ENCODE measurements at regions of chr19 and their contacts with region 1.

Region 1: GRCh38 chr19:9565900-9566705 is 18.2 kb downstream of the ZNF121 start:
- DNase-seq: no peak
- ATAC-seq: no peak
- H3K4me3 ChIP-seq: no peak overlapping the region
- H3K4me3 Mint-ChIP-seq: no peak overlapping the region
- H3K27ac ChIP-seq: no peak overlapping the region
- H3K27ac Mint-ChIP-seq: peak overlapping the region; percentile 5
- H3K4me1 ChIP-seq: no peaks in the 10 kb centered on the region
- H3K4me1 Mint-ChIP-seq: peaks cover 1% of the 10 kb centered on the region
- H3K27me3 ChIP-seq: no peaks in the 10 kb centered on the region
- H3K27me3 Mint-ChIP-seq: no peaks in the 10 kb centered on the region
- CTCF ChIP-seq: no peak

Region 2: DNA sequence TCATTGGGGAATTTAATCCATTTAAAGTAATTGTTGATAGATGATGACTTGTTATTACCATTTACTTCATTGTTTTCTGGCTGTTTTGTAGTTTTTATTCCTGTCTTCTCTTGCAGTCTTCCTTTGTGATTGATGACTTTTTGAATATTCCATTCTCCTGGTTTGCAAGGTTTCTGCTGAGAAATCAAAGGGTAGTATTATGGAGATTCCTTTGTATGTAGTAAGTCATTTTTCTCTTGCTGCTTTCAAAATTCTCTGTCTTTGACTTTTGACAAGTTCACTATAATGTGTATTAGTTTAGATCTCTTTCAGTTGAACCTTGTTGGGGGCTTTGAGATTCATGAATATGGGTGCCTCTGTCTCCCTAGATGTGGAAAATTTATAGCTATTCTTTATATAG is 236.1 kb before region 1 on chr19:
- CTCF ChIA-PET with region 1: no interaction called
- POLR2A ChIA-PET with region 1: no interaction called
- intact Hi-C with region 1: loop called in 1 of 2 experiments (anchors 5 kb)
- DNase-seq: no peak
- ATAC-seq: no peak
- H3K4me3 ChIP-seq: no peak overlapping the region
- H3K4me3 Mint-ChIP-seq: peak overlapping the region; percentile 30
- H3K27ac ChIP-seq: no peak overlapping the region
- H3K27ac Mint-ChIP-seq: no peak overlapping the region
- H3K4me1 ChIP-seq: peaks cover 3% of the 10 kb centered on the region
- H3K4me1 Mint-ChIP-seq: peaks cover 13% of the 10 kb centered on the region
- H3K27me3 ChIP-seq: no peaks in the 10 kb centered on the region
- H3K27me3 Mint-ChIP-seq: no peaks in the 10 kb centered on the region
- CTCF ChIP-seq: no peak

Region 3: DNA sequence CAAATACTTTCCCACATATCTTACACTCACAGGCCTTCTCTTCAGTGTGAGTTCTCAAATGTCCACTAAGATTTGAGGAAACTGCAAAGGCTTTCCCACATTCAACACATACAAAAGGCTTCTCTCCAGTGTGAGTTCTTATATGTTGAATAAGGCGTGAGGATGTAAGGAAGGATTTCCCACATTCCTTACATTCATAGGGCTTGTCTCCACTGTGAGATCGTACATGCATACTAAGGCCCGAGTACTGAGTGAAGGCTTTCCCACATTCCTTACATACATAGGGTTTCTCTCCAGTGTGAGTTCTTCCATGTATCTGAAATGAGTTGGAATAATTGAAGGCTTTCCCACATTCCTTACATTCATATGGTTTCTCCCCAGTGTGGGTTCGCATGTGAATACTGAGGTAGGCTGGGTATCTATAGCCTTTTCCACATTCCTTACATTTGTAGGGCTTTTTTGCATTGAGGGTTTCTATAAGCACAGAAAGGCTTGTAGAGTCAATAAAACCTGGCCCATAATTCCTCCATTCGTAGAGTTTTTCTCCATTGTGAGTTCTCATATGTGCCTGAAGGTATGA is 37.3 kb before region 1 on chr19:
- CTCF ChIA-PET with region 1: no interaction called
- POLR2A ChIA-PET with region 1: no interaction called
- intact Hi-C with region 1: loop called in 1 of 2 experiments (anchors 5 kb)
- DNase-seq: no peak
- ATAC-seq: no peak
- H3K4me3 ChIP-seq: no peak overlapping the region
- H3K4me3 Mint-ChIP-seq: no peak overlapping the region
- H3K27ac ChIP-seq: no peak overlapping the region
- H3K27ac Mint-ChIP-seq: no peak overlapping the region
- H3K4me1 ChIP-seq: no peaks in the 10 kb centered on the region
- H3K4me1 Mint-ChIP-seq: no peaks in the 10 kb centered on the region
- H3K27me3 ChIP-seq: no peaks in the 10 kb centered on the region
- H3K27me3 Mint-ChIP-seq: no peaks in the 10 kb centered on the region
- CTCF ChIP-seq: no peak

Region 4: GRCh38 chr19:9584073-9584833 is 18.1 kb after region 1 on chr19 and contains the start of gene ZNF121:
- CTCF ChIA-PET with region 1: no interaction called
- POLR2A ChIA-PET with region 1: no interaction called
- intact Hi-C with region 1: no loop called
- DNase-seq: peak; percentile 53 to 88 (median 68)
- ATAC-seq: peak; percentile 70
- H3K4me3 ChIP-seq: peak within 1 kb of the TSS; percentile 82
- H3K4me3 Mint-ChIP-seq: peak within 1 kb of the TSS; percentile 98
- H3K27ac ChIP-seq: peak within 1 kb of the TSS; percentile 92 to 93
- H3K27ac Mint-ChIP-seq: peak within 1 kb of the TSS; percentile 98
- H3K4me1 ChIP-seq: peaks cover 23% of the 10 kb centered on the region
- H3K4me1 Mint-ChIP-seq: peaks cover 36% of the 10 kb centered on the region
- H3K27me3 ChIP-seq: no peaks in the 10 kb centered on the region
- H3K27me3 Mint-ChIP-seq: peaks cover 5% of the 10 kb centered on the region
- CTCF ChIP-seq: no peak
- total RNA-seq, gene ZNF121: 42.0 to 42.1 TPM

Measured in CD4-positive, alpha-beta T cell (primary cell).